Stomach (tissue), 19 donors: ENCODE measurements at regions of chr21 and their contacts with region 1.

Region 1: DNA sequence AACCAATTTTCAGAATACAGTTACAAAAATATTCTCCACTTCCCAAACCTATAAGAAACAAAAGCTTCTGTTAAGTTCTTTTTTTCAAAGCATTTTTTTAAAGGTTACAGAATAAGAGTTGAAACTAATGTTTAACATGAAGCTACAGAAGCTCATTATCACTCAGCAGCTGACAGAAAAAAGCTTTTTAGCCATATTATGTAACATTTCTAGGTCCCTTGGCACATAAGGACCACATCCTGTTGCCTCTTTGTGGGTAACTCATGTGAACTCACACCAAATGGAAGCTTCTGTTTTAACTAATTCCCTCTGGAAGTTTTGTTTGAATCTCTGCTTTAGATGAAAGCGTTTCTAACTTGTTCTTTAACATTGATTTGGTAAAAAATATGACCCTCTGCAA is 242.5 kb upstream of the TMPRSS15 start:
- DNase-seq: no peak
- H3K4me3 ChIP-seq: no peak overlapping the region
- H3K27ac ChIP-seq: no peak overlapping the region
- H3K4me1 ChIP-seq: no peaks in the 10 kb centered on the region
- H3K27me3 ChIP-seq: no peaks in the 10 kb centered on the region
- CTCF ChIP-seq: no peak
- EP300 ChIP-seq: no peak
- POLR2A ChIP-seq: no peak

Region 2: DNA sequence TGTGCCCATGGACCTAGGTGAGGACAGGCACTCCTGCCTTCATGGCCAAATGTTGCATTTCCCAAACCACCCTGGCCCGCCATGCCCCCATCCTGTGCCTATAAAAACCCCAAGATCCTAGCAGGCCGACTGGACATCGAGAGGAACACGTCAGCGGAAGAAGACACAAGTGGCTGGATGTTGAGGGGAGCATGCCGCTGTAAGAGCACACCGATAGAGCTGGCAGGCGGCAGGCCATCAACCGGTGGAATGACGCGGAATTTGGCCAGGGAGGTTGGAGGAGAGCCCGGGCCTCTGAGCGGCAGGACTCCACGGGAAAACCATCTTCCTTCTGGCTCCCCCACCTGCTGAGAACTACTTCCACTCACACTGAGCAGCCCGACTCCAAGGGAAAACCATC is 118.6 kb after region 1 on chr21:
- intact Hi-C with region 1: loop called (anchors 5 kb)
- DNase-seq: no peak
- H3K4me3 ChIP-seq: no peak overlapping the region
- H3K27ac ChIP-seq: no peak overlapping the region
- H3K4me1 ChIP-seq: no peaks in the 10 kb centered on the region
- H3K27me3 ChIP-seq: no peaks in the 10 kb centered on the region
- CTCF ChIP-seq: no peak
- EP300 ChIP-seq: no peak
- POLR2A ChIP-seq: no peak